GM23248 (cell line): ENCODE measurements at regions of chr11 and their contacts with region 1.

Region 1: DNA sequence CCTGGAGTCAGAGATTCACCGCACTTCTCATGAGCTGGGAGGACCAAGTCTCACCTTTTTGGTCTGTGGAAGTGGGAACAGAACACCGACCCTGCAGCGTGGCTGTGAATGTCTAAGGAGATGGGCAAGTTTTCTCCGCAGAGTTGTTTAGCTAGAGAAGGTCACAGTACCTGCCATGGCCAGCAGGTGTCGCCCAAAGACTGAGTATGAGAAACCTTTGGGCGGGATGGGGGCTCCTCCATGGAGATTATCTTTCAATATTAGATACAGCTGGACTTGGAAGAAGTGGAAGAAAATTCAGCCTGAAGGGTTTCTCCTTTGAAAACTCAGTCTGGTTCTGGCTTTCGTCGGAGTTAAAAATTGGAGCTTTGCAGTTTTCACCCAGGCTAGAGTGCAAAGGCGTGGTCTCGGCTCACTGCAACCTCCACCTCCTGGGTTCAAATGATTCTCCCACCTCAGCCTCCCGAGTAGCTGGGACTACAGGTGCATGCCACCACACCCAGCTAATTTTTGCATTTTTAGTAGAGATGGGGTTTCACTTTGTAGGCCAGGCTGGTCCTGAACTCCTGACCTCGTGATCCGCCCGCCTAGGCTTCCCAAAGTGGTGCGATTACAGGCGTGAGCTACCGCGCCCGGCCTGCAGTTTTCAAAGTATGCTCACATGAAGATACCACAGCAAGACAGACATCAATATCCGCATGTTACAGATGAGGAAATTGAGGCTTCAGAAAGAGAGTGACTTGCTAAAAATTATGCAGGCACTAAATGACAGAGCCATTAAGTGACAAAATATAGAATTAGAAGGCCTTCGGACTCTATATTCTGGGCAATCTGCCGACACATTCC is 10.7 kb upstream of the DSCAML1 start:
- DNase-seq: peak; percentile 67
- H3K4me3 ChIP-seq: no peak overlapping the region
- H3K27ac ChIP-seq: no peak overlapping the region
- H3K4me1 ChIP-seq: no peaks in the 10 kb centered on the region
- H3K27me3 ChIP-seq: peaks cover 7% of the 10 kb centered on the region; the same call in 1 of the 2 replicates

Region 2: GRCh38 chr11:117438371-117439000 is 369.2 kb before region 1 on chr11:
- in situ Hi-C with region 1: loop called (anchors 10 kb)
- DNase-seq: no peak
- H3K4me3 ChIP-seq: no peak overlapping the region
- H3K27ac ChIP-seq: no peak overlapping the region
- H3K4me1 ChIP-seq: no peaks in the 10 kb centered on the region
- H3K27me3 ChIP-seq: peaks cover 27% of the 10 kb centered on the region

Region 3: DNA sequence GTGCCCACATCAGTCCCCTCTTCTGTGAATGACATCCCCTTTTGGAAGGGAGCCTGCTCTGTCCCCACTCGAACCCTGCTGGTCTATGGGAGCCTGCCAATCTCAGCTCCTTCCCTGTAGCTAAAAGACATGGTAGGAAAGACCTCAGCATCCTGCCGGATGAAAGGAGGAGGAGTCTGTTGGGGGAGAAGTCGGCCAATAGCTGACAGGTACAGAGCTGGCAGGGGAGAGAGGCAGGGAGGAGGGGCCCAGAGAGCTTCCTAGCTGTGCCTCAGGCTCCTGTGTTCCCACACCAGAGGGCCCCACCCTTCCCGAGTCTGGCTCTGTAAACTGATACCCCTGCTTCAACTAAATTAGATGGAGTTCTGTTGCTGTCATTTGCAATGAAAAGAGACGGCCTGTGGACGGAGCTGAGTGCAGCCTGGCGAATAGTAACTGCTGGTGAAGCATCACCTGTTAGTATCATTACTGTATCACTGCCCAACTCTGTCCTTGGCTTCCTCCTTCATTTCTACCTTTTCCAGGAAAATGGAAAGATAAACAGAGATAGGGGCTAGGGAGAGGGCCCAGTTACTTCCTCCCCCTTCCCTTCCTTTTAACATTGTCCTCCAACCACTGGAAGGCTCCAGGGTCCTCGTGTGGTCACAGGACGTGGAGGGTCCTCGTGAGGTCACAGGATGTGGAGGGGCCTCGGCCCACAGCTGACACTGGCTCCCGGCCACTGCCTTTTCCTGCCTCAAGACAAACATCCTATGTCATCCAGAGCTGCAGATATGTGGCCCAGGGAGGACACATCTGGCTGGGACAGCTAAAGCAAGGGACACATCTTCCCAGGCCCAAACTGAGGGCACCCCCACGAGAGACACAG is 53.7 kb after region 1 on chr11:
- in situ Hi-C with region 1: no loop called
- DNase-seq: no peak
- H3K4me3 ChIP-seq: no peak overlapping the region
- H3K27ac ChIP-seq: no peak overlapping the region
- H3K4me1 ChIP-seq: no peaks in the 10 kb centered on the region
- H3K27me3 ChIP-seq: no peaks in the 10 kb centered on the region; the same call in none of the 2 replicates